Activated CD4-positive, alpha-beta T cell treated with anti-CD3 and anti-CD28 coated beads, Interleukin-2, amount 10 ng/mL, durations not matched to agents 7 days and 5 days (primary cell): ENCODE measurements at regions of chr2 and their contacts with region 1.

Region 1: DNA sequence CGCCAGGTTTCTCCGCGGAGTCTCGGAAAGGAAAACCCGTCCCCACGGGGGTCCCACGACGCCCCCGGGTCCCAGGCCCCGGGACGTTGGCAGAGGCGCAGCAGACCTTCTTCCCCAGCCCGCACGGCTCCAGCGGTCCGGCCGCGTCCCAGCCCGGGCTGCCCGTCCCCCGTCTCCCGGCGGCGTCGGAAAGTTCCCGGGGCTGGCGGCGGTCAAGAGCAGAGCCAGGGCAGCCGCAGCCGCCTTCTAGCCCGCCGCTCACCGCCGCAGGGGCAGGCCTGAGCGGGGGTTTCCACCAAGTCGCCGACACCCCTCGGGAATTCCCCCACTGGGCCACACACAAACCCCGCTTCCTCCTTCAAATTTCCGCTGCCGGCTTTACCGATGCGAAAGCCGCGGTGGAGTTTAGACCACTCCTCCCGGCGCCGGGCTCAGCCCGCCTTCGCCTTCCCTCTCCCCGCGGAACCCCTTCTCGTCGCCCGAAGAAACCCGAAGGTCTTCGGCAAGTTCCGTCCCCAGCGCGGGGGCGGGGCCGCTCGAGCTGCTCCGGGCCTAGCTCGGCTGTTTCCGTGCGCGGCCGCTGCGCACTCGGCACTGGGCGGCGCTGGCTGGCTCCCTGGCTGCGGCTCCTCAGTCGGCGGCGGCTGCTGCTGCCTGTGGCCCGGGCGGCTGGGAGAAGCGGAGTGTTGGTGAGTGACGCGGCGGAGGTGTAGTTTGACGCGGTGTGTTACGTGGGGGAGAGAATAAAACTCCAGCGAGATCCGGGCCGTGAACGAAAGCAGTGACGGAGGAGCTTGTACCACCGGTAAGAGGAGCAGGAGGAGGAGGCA is at the start of gene CREB1:
- DNase-seq: peak; percentile 99
- H3K4me3 Mint-ChIP-seq: peak within 1 kb of the TSS; percentile 96
- H3K27ac Mint-ChIP-seq: peak within 1 kb of the TSS; percentile 100
- H3K4me1 Mint-ChIP-seq: peaks cover 61% of the 10 kb centered on the region
- H3K27me3 Mint-ChIP-seq: peaks cover 3% of the 10 kb centered on the region
- total RNA-seq, gene CREB1: 92.5 to 118 TPM

Region 2: DNA sequence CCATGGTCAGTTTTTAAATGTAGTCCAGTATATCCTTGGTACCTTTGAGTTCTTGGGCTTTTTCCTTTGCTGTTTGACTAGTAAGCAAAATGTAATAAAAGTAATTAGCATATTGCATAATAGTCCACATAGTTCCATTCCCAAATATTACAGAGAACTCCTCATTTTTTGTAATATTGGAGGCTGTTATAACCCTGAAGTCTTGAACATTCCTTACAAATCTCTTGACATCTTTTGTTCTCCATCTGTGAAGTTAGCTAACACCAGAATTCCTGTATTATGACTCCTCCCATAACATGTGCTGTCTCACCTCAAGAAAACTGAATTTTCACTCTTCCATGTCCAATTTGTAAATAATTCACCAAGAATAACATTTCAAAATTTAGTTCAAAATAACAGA is 17.3 kb after region 1 on chr2:
- CTCF ChIA-PET with region 1: interaction called, 12 read pairs
- POLR2A ChIA-PET with region 1: no interaction called
- DNase-seq: no peak
- H3K4me3 Mint-ChIP-seq: no peak overlapping the region
- H3K27ac Mint-ChIP-seq: no peak overlapping the region
- H3K4me1 Mint-ChIP-seq: peaks cover 33% of the 10 kb centered on the region
- H3K27me3 Mint-ChIP-seq: no peaks in the 10 kb centered on the region